KBM-7 (cell line): ENCODE measurements at regions of chr6 and their contacts with region 1.

Region 1: GRCh38 chr6:96626759-96627364 is 63.9 kb downstream of the FHL5 start:
- DNase-seq: peak; percentile 34

Region 2: DNA sequence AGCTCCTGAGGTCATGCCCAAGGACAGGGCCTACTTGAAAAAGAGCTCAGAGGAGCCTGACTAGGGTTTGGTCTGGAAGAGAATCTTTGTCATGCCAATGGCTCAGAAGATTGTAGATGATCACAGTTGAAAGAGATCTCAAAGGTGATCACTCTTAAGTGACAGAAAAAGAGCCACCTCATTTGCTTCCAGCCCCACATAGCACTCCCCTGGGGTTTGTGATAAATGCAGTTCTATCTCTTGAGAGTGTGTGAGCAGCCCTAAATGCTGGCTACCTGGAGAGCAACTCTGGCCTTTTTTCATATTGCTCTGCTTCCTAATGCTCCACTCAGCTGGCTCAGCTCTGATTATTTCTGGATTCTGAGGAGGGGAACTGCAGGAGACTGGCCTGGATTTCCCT is 336.9 kb after region 1 on chr6:
- in situ Hi-C with region 1: no loop called
- DNase-seq: no peak

Region 3: DNA sequence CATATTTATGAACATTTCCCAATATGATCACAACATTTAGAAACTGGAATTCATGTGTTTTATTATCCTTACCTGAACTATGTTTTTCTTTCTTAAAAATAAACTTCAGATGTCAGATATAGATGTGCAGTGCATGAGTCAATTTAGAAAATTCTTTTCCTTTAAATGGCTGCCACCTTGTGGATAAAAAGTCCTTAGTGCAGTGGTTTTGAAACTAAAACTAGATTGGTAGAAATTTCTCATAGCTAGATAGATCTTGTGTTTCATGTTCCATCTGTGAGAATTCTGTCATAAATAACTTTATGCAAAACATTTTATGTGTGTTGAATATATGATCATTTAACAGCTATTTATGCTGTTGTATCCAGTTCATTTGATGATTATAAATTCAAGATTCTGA is 432.6 kb after region 1 on chr6:
- in situ Hi-C with region 1: loop called (anchors 25 kb)
- DNase-seq: peak; percentile 44